Caco-2 (cell line): ENCODE measurements at regions of chr17 and their contacts with region 1.

Region 1: GRCh38 chr17:16353317-16354174 is at the start of gene CENPV:
- DNase-seq: peak; percentile 74 to 82
- H3K4me3 ChIP-seq: peak within 1 kb of the TSS; percentile 56
- H3K4me3 Mint-ChIP-seq: peak within 1 kb of the TSS; percentile 93
- H3K27ac Mint-ChIP-seq: peak within 1 kb of the TSS; percentile 88
- H3K4me1 ChIP-seq: peaks cover 7% of the 10 kb centered on the region; the same call in 1 of the 2 replicates
- H3K4me1 Mint-ChIP-seq: no peaks in the 10 kb centered on the region
- H3K27me3 ChIP-seq: no peaks in the 10 kb centered on the region
- H3K27me3 Mint-ChIP-seq: no peaks in the 10 kb centered on the region
- CTCF ChIP-seq: no peak
- total RNA-seq, gene CENPV: 92.8 and 103 TPM in 2 replicates

Region 2: GRCh38 chr17:16363749-16364536 is 10.4 kb after region 1 on chr17:
- CTCF ChIA-PET with region 1: interaction called, 17 read pairs
- POLR2A ChIA-PET with region 1: interaction called, 3 read pairs
- intact Hi-C with region 1: no loop called
- DNase-seq: peak; percentile 75 to 76
- H3K4me3 ChIP-seq: no peak overlapping the region
- H3K4me3 Mint-ChIP-seq: no peak overlapping the region
- H3K27ac Mint-ChIP-seq: no peak overlapping the region
- H3K4me1 ChIP-seq: 0 out of 2 replicates have a peak, but pooled peaks cover 4% of the 10 kb centered on the region
- H3K4me1 Mint-ChIP-seq: no peaks in the 10 kb centered on the region
- H3K27me3 ChIP-seq: no peaks in the 10 kb centered on the region
- H3K27me3 Mint-ChIP-seq: no peaks in the 10 kb centered on the region
- CTCF ChIP-seq: peak; percentile 93 to 95

Region 3: DNA sequence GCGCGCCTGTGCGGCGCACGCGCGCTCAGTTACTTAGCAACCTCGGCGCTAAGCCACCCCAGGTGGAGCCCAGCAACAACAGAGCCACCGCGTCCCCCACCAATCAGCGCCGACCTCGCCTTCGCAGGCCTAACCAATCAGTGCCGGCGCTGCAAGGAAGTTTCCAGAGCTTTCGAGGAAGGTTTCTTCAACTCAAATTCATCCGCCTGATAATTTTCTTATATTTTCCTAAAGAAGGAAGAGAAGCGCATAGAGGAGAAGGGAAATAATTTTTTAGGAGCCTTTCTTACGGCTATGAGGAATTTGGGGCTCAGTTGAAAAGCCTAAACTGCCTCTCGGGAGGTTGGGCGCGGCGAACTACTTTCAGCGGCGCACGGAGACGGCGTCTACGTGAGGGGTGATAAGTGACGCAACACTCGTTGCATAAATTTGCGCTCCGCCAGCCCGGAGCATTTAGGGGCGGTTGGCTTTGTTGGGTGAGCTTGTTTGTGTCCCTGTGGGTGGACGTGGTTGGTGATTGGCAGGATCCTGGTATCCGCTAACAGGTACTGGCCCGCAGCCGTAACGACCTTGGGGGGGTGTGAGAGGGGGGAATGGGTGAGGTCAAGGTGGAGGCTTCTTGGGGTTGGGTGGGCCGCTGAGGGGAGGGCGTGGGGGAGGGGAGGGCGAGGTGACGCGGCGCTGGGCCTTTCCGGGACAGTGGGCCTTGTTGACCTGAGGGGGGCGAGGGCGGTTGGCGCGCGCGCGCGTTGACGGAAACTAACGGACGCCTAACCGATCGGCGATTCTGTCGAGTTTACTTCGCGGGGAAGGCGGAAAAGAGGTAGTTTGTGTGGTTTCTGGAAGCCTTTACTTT is 27.3 kb after region 1 on chr17 and contains the start of gene UBB:
- CTCF ChIA-PET with region 1: interaction called, 7 read pairs
- POLR2A ChIA-PET with region 1: interaction called, 12 read pairs
- intact Hi-C with region 1: no loop called
- DNase-seq: peak; percentile 98 to 99
- H3K4me3 ChIP-seq: peak within 1 kb of the TSS; percentile 72
- H3K4me3 Mint-ChIP-seq: peak within 1 kb of the TSS; percentile 93
- H3K27ac Mint-ChIP-seq: peak within 1 kb of the TSS; percentile 100
- H3K4me1 ChIP-seq: no peaks in the 10 kb centered on the region
- H3K4me1 Mint-ChIP-seq: peaks cover 7% of the 10 kb centered on the region
- H3K27me3 ChIP-seq: no peaks in the 10 kb centered on the region
- H3K27me3 Mint-ChIP-seq: no peaks in the 10 kb centered on the region
- CTCF ChIP-seq: no peak
- total RNA-seq, gene UBB: 1,900 and 1,904 TPM in 2 replicates